PC-9 (cell line): ENCODE measurements at regions of chr1 and their contacts with region 1.

Region 1: DNA sequence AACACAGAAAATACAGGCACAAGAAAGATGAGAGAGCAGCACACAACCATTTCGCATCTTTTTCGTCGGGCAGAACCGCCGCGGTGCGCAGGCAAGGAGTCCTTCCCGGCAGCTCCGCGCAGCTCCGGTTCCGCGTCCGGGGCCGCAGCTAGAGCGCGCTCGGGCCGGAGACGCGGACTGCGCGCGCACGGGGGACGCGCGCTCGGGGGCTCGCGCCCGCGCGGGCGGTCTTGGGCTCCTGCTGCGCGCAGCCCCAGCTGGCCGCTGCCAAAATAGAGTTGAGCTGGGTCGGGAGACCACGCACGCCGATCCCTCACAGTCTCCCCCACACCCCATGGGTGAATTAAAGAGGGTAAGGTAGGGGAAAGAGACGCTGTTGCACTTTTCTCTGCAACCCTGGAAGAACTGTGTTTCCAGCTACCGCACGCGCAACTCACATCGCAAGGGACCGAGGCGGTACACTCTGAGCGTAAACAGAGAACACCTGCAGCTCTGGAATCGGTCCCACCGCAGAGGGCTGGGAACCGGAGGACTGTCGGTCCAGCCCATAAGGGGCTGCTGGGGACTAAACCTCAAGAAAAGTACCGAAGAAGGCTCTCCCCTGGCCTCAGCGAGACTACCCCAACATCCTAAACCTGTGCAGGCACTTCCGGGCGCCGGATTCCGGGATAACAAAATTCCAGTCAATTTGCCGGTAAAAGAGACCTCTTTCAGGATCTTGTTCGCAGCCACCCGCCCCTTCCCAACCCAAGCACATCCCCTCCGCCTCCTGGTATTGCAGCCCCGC is 1.7 kb downstream of the NR5A2 start:
- DNase-seq: peak; percentile 38 to 63
- H3K4me3 ChIP-seq: peak overlapping the region; percentile 77
- H3K27ac ChIP-seq: peak overlapping the region; percentile 40
- H3K4me1 ChIP-seq: peaks cover 22% of the 10 kb centered on the region
- H3K27me3 ChIP-seq: no peaks in the 10 kb centered on the region
- CTCF ChIP-seq: no peak

Region 2: DNA sequence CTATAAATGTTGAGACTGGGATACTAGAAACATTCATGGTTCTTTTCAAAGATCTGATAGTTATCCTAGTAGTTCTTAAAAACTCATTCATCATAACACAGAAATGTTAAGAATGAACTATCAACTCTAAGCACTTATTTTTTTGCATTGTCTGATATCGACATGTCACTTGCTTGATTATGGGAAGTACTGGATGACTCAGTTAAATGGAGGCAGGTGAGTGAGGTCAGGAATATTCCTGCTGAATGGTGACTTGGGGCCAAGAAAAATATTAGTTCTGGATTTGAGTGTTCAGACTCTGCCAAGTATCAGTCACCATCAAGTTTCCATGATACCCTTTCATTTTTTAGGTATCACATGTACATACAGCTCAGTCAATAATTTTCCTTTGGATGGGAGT is 1808.8 kb before region 1 on chr1:
- CTCF ChIA-PET with region 1: no interaction called
- POLR2A ChIA-PET with region 1: interaction called, 10 read pairs
- intact Hi-C with region 1: no loop called
- DNase-seq: peak; percentile 26 to 39
- H3K4me3 ChIP-seq: no peak overlapping the region
- H3K27ac ChIP-seq: no peak overlapping the region
- H3K4me1 ChIP-seq: no peaks in the 10 kb centered on the region
- H3K27me3 ChIP-seq: no peaks in the 10 kb centered on the region
- CTCF ChIP-seq: no peak

Region 3: DNA sequence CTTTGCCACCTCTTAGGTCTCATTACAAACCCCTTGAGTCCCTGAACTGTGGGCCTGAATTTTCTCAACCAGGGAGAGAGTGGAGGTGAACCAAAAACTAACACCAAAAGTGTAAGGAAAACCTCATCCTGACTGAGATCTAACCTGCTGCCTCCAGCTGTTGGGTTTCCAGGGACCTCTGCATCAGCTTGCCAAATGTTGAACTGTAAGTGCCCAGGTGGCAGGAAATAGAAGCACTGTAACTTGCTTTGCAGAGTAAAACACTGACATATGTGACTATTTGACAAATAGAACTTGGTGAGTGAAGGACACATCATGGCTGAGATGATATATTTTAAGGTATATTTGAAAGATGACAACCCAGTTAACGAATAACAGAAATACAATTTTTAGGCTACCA is 50.2 kb before region 1 on chr1:
- CTCF ChIA-PET with region 1: no interaction called
- POLR2A ChIA-PET with region 1: no interaction called
- intact Hi-C with region 1: no loop called
- DNase-seq: no peak
- H3K4me3 ChIP-seq: no peak overlapping the region
- H3K27ac ChIP-seq: no peak overlapping the region
- H3K4me1 ChIP-seq: no peaks in the 10 kb centered on the region
- H3K27me3 ChIP-seq: no peaks in the 10 kb centered on the region
- CTCF ChIP-seq: no peak

Region 4: DNA sequence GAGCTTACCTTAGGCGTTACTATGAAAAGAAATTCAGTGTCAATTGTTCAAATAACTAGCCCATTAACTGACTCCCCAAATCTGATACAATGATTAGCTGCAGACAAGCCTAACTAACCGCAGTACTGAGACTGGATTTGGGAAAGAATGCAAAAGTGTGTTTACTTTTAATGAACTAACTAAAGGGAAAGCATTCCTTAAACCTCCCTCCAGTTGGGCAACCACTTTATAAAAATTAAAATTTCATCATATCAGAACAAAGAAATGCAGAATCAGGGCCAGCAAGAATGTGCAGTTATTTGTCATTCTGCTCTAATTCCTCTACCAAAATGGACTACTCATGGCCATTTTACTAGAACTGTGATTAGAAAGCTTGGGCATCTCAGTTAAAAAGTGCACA is 13.4 kb before region 1 on chr1:
- CTCF ChIA-PET with region 1: interaction called, 3 read pairs
- POLR2A ChIA-PET with region 1: interaction called, 11 read pairs
- intact Hi-C with region 1: no loop called
- DNase-seq: peak in 1 of 2 experiments; percentile 52
- H3K4me3 ChIP-seq: no peak overlapping the region
- H3K27ac ChIP-seq: no peak overlapping the region
- H3K4me1 ChIP-seq: no peaks in the 10 kb centered on the region
- H3K27me3 ChIP-seq: no peaks in the 10 kb centered on the region
- CTCF ChIP-seq: no peak